Mammary epithelial cell (primary cell): ENCODE measurements at regions of chr16 and their contacts with region 1.

Region 1: DNA sequence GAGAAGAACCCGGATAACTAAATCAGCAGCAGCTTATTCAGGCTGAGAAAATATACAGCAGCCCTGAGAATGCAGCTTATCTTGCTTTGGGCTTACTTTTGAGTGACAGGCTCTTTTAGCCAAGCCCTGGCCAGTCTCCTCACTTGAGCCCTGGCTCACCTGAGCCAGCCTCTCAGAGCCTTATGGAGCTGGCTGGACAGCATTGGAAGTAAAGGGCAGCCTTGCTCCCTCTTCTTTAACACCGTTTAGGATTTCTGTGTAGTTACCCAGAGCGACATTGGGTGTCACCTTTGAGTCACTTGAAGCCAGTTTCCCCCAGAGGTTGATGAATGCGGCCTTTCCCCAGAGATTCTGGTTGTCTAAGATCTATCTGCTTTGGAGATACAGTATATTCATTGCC is 7.7 kb upstream of the NPIPB2 start:
- DNase-seq: peak; percentile 18
- H3K4me3 ChIP-seq: no peak overlapping the region
- H3K27ac ChIP-seq: no peak overlapping the region
- H3K4me1 ChIP-seq: no peaks in the 10 kb centered on the region
- H3K27me3 ChIP-seq: no peaks in the 10 kb centered on the region
- CTCF ChIP-seq: peak; percentile 42 to 56

Region 2: DNA sequence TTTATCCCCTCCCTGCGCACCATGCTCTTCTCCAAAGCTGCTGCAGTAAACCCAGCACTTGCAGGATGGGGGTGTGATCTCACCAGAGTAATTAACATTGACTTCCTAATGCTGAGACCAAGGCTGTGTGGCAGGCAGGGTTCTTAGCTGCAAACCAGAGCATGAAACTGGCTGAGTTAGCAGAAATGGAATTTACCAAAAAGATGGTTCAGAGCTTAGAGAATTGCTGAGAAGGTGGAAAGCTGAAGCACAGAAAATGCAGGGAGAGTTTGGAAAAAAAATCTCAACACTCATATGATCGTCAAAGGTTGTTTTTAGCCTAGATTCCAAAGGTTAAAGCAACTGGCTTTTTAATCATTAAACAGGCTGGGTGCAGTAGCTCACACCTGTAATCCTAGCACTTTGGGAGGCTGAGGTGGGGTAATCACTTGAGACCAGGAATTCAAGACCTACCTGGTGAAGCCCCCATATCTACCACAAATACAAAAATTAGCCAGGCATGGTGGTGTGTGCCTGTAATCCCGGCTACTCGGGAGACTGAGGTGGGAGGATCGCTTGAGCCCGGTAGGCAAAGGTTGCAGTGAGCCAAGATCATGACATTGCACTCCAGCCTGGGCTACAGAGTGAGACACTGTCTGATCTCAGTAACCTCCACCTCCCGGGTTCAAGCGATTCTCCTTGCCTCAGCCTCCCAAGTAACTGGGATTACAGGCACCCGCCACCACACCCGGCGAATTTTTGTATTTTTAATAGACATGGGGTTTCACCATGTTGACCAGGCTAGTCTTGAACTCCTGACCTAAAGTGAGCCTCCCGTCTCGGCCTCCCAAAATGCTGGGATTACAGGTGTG is 200.9 kb before region 1 on chr16:
- CTCF ChIA-PET with region 1: no interaction called
- dilution Hi-C with region 1: no loop called
- in situ Hi-C with region 1: no loop called
- intact Hi-C with region 1: no loop called
- DNase-seq: no peak
- H3K4me3 ChIP-seq: no peak overlapping the region
- H3K27ac ChIP-seq: no peak overlapping the region
- H3K4me1 ChIP-seq: peaks cover 1% of the 10 kb centered on the region
- H3K27me3 ChIP-seq: no peaks in the 10 kb centered on the region
- CTCF ChIP-seq: no peak

Region 3: GRCh38 chr16:11871193-11871592 is 78.3 kb before region 1 on chr16:
- CTCF ChIA-PET with region 1: interaction called, 27 read pairs
- dilution Hi-C with region 1: no loop called
- in situ Hi-C with region 1: no loop called
- intact Hi-C with region 1: no loop called
- DNase-seq: no peak
- H3K4me3 ChIP-seq: no peak overlapping the region
- H3K27ac ChIP-seq: no peak overlapping the region
- H3K4me1 ChIP-seq: peaks cover 14% of the 10 kb centered on the region
- H3K27me3 ChIP-seq: no peaks in the 10 kb centered on the region
- CTCF ChIP-seq: no peak

Region 4: GRCh38 chr16:12057266-12057665 is 107.7 kb after region 1 on chr16:
- CTCF ChIA-PET with region 1: no interaction called
- dilution Hi-C with region 1: no loop called
- in situ Hi-C with region 1: no loop called
- intact Hi-C with region 1: no loop called
- DNase-seq: no peak
- H3K4me3 ChIP-seq: no peak overlapping the region
- H3K27ac ChIP-seq: no peak overlapping the region
- H3K4me1 ChIP-seq: peaks cover 12% of the 10 kb centered on the region
- H3K27me3 ChIP-seq: no peaks in the 10 kb centered on the region
- CTCF ChIP-seq: no peak